CD4-positive, alpha-beta T cell (primary cell): ENCODE measurements at regions of chr15 and their contacts with region 1.

Region 1: GRCh38 chr15:63188926-63189871 is at the start of gene RAB8B:
- DNase-seq: peak; percentile 94 to 99 (median 97)
- ATAC-seq: peak; percentile 69
- H3K4me3 ChIP-seq: peak within 1 kb of the TSS; percentile 88
- H3K4me3 Mint-ChIP-seq: peak within 1 kb of the TSS; percentile 96
- H3K27ac ChIP-seq: peak within 1 kb of the TSS; percentile 94 to 95
- H3K27ac Mint-ChIP-seq: peak within 1 kb of the TSS; percentile 95
- H3K4me1 ChIP-seq: peaks cover 28% of the 10 kb centered on the region
- H3K4me1 Mint-ChIP-seq: peaks cover 54% of the 10 kb centered on the region
- H3K27me3 ChIP-seq: no peaks in the 10 kb centered on the region
- H3K27me3 Mint-ChIP-seq: no peaks in the 10 kb centered on the region
- CTCF ChIP-seq: no peak
- total RNA-seq, gene RAB8B: 74.5 to 75.2 TPM

Region 2: GRCh38 chr15:63157118-63157843 is 31.9 kb before region 1 on chr15 and contains the start of gene RPS27L:
- CTCF ChIA-PET with region 1: interaction called, 3 read pairs
- POLR2A ChIA-PET with region 1: interaction called, 103 read pairs
- intact Hi-C with region 1: loop called (anchors 1 kb)
- DNase-seq: peak; percentile 74 to 92 (median 86)
- ATAC-seq: peak; percentile 97
- H3K4me3 ChIP-seq: peak within 1 kb of the TSS; percentile 95
- H3K4me3 Mint-ChIP-seq: peak within 1 kb of the TSS; percentile 100
- H3K27ac ChIP-seq: peak within 1 kb of the TSS; percentile 53 to 70
- H3K27ac Mint-ChIP-seq: peak within 1 kb of the TSS; percentile 98
- H3K4me1 ChIP-seq: peaks cover 10% of the 10 kb centered on the region
- H3K4me1 Mint-ChIP-seq: peaks cover 36% of the 10 kb centered on the region
- H3K27me3 ChIP-seq: no peaks in the 10 kb centered on the region
- H3K27me3 Mint-ChIP-seq: no peaks in the 10 kb centered on the region
- CTCF ChIP-seq: no peak
- total RNA-seq, gene RPS27L: 40.0 to 43.1 TPM

Region 3: DNA sequence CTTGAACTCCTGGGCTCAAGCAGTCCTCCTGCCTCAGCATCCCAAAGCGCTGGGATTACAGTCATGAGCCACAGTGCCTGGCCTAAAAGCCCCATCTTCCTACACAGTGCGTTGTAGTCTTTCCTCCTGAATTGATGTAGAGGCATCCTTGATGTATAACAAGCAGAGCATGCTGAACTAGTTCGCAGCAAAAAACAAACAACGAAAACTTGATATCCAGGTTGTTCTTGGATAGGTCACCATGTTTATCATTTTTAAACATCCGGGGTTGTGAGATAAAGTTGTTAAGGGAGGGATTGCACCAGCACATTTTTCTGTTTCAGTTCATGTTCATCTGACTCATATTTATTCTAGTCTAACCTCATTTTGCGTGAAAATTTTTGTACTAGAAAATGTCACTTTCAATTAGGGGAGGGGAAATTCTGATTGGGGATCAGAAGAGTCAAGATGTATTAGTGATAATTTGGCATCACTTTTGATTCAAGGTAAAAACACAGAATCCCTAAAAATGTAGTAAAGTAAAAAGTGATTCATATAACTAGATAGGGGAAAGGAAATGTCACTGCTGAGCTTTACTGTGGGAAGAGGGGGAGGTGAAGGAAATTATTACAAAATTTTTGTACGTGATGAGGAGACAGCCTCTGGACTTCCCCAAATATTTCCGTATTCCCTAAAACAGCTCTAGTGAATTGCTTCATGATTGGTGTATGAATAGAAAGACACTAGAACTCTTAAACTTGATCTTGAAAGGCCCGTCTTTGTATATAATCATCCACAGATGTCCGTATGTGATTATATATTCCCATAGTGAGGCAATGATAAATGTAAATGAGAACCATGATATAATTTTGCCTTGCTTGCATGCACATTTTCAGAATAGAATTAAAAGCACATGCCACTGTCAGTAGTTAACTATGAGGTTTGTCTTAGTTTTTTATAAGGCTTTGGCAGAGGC is 23.1 kb after region 1 on chr15:
- CTCF ChIA-PET with region 1: interaction called, 11 read pairs
- POLR2A ChIA-PET with region 1: interaction called, 98 read pairs
- intact Hi-C with region 1: loop called (anchors 2 kb)
- DNase-seq: peak in 3 of 14 experiments; percentile 46 to 64 (median 50)
- ATAC-seq: peak; percentile 47
- H3K4me3 ChIP-seq: no peak overlapping the region
- H3K4me3 Mint-ChIP-seq: peak overlapping the region; percentile 3
- H3K27ac ChIP-seq: peak overlapping the region in 1 of 2 donors; percentile 12
- H3K27ac Mint-ChIP-seq: peak overlapping the region; percentile 40
- H3K4me1 ChIP-seq: peaks cover 41% of the 10 kb centered on the region
- H3K4me1 Mint-ChIP-seq: peaks cover 72% of the 10 kb centered on the region
- H3K27me3 ChIP-seq: no peaks in the 10 kb centered on the region
- H3K27me3 Mint-ChIP-seq: no peaks in the 10 kb centered on the region
- CTCF ChIP-seq: no peak

Region 4: DNA sequence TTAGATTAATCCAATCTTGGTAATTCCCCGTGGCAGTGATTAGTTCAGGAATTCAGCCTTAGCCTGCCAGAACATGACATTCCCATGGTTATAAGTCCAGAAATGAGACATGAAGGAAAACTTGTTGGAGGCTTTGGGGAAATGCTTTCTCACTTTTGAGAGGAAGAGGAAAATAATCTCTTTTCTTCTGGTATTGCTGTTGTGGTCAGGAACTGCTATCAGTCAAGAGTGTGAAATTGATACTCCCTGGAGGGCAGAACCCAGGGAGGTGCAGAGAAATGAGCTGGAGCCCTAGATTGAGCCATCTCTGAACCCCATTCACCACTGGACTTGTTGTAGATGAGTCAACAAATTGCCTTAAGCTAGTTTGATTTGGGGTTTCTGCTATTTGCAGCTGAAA is 49.6 kb after region 1 on chr15:
- CTCF ChIA-PET with region 1: no interaction called
- POLR2A ChIA-PET with region 1: interaction called, 176 read pairs
- intact Hi-C with region 1: no loop called
- DNase-seq: peak in 1 of 14 experiments; percentile 25
- ATAC-seq: no peak
- H3K4me3 ChIP-seq: no peak overlapping the region
- H3K4me3 Mint-ChIP-seq: no peak overlapping the region
- H3K27ac ChIP-seq: no peak overlapping the region
- H3K27ac Mint-ChIP-seq: no peak overlapping the region
- H3K4me1 ChIP-seq: peaks cover 37% of the 10 kb centered on the region
- H3K4me1 Mint-ChIP-seq: peaks cover 86% of the 10 kb centered on the region
- H3K27me3 ChIP-seq: no peaks in the 10 kb centered on the region
- H3K27me3 Mint-ChIP-seq: no peaks in the 10 kb centered on the region
- CTCF ChIP-seq: no peak

Region 5: DNA sequence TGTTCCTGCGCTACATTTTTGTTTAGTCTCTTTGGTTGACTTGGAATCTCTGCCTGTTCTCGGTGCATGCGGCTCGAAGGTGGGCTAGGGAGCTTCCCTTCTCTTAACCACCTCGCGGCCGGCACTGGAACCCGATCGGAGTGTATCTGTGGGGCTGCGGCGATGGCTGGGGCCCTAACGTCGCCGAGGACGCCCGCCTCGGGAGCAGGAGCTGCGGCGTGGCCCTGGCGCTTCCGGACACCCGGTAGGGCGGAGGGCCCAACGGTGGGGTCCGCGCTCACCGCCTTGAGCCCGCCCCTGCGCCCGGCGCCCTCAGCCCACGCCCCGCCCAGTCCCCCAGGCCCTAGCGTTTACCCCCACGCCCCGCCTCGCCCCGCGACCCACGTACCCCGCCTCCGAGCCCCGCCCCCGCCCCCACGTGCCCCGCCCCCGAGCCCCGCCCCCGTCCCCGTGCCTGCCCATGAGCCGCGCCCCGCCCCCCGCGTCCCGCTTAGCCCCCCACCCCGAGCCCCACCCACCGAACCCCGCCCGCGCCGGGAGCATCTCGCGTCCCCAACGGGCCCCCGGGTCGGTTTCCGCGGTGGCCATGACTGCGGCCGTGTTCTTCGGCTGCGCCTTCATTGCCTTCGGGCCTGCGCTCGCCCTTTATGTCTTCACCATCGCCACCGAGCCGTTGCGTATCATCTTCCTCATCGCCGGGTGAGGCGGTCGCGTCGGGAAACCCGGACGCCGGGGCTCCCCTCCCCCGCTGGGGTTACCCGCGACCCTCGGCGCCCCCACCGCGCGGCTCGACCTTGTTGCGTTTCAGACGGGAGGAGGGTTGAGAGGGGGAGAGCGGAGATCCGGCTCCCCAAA is 88.1 kb after region 1 on chr15 and contains the start of gene APH1B:
- CTCF ChIA-PET with region 1: interaction called, 4 read pairs
- POLR2A ChIA-PET with region 1: interaction called, 48 read pairs
- intact Hi-C with region 1: loop called (anchors 1 to 2 kb)
- DNase-seq: peak; percentile 61 to 94 (median 79)
- ATAC-seq: peak; percentile 88
- H3K4me3 ChIP-seq: peak within 1 kb of the TSS; percentile 86
- H3K4me3 Mint-ChIP-seq: peak within 1 kb of the TSS; percentile 91
- H3K27ac ChIP-seq: peak within 1 kb of the TSS; percentile 71 to 80
- H3K27ac Mint-ChIP-seq: peak within 1 kb of the TSS; percentile 82
- H3K4me1 ChIP-seq: peaks cover 25% of the 10 kb centered on the region
- H3K4me1 Mint-ChIP-seq: peaks cover 48% of the 10 kb centered on the region
- H3K27me3 ChIP-seq: no peaks in the 10 kb centered on the region
- H3K27me3 Mint-ChIP-seq: no peaks in the 10 kb centered on the region
- CTCF ChIP-seq: no peak
- total RNA-seq, gene APH1B: 9.3 to 11.6 TPM